Caco-2 (cell line): ENCODE measurements at regions of chr16 and their contacts with region 1.

Region 1: DNA sequence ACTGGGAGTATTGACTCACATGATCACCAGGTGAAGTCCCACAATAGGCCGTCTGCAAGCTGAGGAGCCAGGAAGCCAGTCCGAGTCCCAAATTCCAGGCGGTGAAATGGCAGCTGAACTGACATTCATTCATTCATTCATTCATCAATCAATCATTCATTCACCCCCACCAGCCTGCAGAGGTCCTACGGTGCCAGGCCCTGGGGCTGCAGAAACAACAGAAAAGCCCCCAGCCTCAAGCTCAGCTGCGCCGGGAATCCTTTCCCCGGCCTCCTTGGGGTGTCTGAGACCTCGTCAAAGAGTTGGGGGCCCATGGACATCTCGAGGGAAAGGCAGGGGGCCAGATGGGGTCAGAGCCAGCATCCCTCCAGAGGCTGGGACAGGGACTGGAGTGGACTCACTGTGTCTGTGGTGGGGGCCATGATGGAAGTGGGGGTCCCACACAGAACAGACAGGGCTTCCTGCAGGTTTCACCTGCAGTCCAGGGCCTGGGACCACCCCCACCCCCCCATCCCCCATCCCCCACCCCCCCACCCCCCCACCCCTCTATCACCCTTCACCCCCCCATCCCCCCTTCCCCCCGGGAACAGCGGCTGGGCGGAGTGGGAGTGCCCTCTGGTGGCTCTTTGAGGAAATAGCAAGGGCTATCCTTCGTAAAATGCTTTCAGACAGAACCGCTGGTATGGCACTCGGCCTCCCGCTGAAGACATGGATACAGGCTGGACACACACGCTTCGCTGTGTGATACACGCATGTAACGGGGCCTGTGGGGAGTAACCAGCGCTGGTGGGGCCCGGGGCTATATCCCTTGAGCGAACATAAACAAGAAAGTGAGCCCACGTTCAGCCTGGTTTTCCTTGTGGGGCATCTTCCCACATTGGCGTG is 8.5 kb upstream of the ZC3H18 start:
- DNase-seq: peak in 1 of 2 experiments; percentile 75
- H3K4me3 ChIP-seq: no peak overlapping the region
- H3K4me3 Mint-ChIP-seq: no peak overlapping the region
- H3K27ac Mint-ChIP-seq: no peak overlapping the region
- H3K4me1 ChIP-seq: peaks cover 9% of the 10 kb centered on the region
- H3K4me1 Mint-ChIP-seq: peaks cover 6% of the 10 kb centered on the region
- H3K27me3 ChIP-seq: no peaks in the 10 kb centered on the region
- H3K27me3 Mint-ChIP-seq: peaks cover 2% of the 10 kb centered on the region
- CTCF ChIP-seq: peak; percentile 80 to 88

Region 2: GRCh38 chr16:88442727-88443576 is 118.8 kb before region 1 on chr16:
- CTCF ChIA-PET with region 1: interaction called, 4 read pairs
- POLR2A ChIA-PET with region 1: interaction called, 4 read pairs
- intact Hi-C with region 1: loop called (anchors 1 kb)
- DNase-seq: peak; percentile 83 to 95
- H3K4me3 ChIP-seq: no peak overlapping the region
- H3K4me3 Mint-ChIP-seq: no peak overlapping the region
- H3K27ac Mint-ChIP-seq: no peak overlapping the region
- H3K4me1 ChIP-seq: peaks cover 9% of the 10 kb centered on the region
- H3K4me1 Mint-ChIP-seq: no peaks in the 10 kb centered on the region
- H3K27me3 ChIP-seq: no peaks in the 10 kb centered on the region
- H3K27me3 Mint-ChIP-seq: no peaks in the 10 kb centered on the region
- CTCF ChIP-seq: peak; percentile 98 to 99

Region 3: GRCh38 chr16:88585269-88585668 is 23.5 kb after region 1 on chr16:
- CTCF ChIA-PET with region 1: interaction called, 11 read pairs
- POLR2A ChIA-PET with region 1: no interaction called
- intact Hi-C with region 1: no loop called
- DNase-seq: no peak
- H3K4me3 ChIP-seq: no peak overlapping the region
- H3K4me3 Mint-ChIP-seq: no peak overlapping the region
- H3K27ac Mint-ChIP-seq: no peak overlapping the region
- H3K4me1 ChIP-seq: no peaks in the 10 kb centered on the region
- H3K4me1 Mint-ChIP-seq: no peaks in the 10 kb centered on the region
- H3K27me3 ChIP-seq: no peaks in the 10 kb centered on the region
- H3K27me3 Mint-ChIP-seq: no peaks in the 10 kb centered on the region
- CTCF ChIP-seq: no peak